Activated CD8-positive, alpha-beta memory T cell treated with anti-CD3 and anti-CD28 coated beads, Interleukin-2, amount 10 ng/mL, durations not matched to agents 7 days and 5 days (primary cell): ENCODE measurements at regions of chr12 and their contacts with region 1.

Region 1: GRCh38 chr12:49553512-49554088 is 14.3 kb downstream of the MCRS1 start:
- DNase-seq: no peak
- ATAC-seq: peak; percentile 74
- H3K4me3 Mint-ChIP-seq: no peak overlapping the region
- H3K27ac Mint-ChIP-seq: no peak overlapping the region
- H3K4me1 Mint-ChIP-seq: peaks cover 3% of the 10 kb centered on the region
- H3K27me3 Mint-ChIP-seq: peaks cover 17% of the 10 kb centered on the region

Region 2: DNA sequence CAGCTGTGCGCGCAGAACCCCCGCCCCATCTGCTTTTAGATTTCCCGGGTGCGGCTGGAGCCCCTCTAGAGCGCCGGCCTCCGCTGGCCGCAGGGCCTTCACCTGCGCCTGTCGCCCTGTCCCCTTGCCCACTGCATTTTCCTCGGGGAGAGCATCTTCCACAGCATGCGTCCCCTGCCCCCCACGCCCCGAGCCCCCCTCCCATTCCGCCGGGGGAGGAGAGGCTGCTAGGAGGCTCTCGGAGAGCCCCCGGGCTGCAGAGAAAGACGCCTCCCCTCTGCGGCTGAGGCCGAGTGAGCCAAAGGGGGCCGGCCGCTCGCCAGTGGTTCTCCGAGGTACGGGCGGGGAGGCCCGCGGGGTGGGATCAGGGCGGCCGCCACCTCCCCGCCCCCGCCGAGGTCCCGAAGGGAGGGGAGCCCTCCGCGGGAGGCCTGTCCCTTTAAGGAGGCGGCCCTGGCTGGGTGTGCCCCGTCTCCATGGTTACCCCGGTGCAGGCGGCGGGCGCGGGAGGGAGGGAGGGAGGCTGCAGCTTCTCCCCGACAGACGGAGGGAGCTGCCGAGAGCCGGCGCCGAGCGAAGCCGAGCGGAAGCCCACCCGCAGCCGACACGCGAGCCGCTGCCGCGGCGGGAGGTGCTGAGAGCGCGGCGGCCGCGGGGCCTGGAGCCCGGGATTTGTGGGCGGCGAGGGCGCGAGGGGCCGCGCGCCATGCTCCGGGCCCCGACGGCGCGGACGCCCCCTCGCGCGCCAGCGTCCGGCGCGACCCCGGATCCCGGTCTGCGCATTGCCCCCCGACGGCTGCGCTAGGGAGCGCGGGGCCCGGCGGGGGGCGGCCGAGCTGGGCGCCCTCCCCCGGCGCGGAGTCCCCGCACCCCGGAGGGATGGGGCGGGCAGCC is 14.8 kb before region 1 on chr12 and contains the start of gene KCNH3:
- CTCF ChIA-PET with region 1: interaction called, 12 read pairs
- DNase-seq: peak; percentile 95
- ATAC-seq: peak; percentile 92
- H3K4me3 Mint-ChIP-seq: peak within 1 kb of the TSS; percentile 49
- H3K27ac Mint-ChIP-seq: no peak within 1 kb of the TSS
- H3K4me1 Mint-ChIP-seq: peaks cover 14% of the 10 kb centered on the region
- H3K27me3 Mint-ChIP-seq: peaks cover 53% of the 10 kb centered on the region
- total RNA-seq, gene KCNH3: 1.1 to 1.2 TPM

Region 3: GRCh38 chr12:49567611-49568441 is 14.2 kb after region 1 on chr12 and contains the start of gene MCRS1:
- CTCF ChIA-PET with region 1: interaction called, 56 read pairs
- DNase-seq: peak; percentile 93
- ATAC-seq: peak; percentile 81
- H3K4me3 Mint-ChIP-seq: peak within 1 kb of the TSS; percentile 88
- H3K27ac Mint-ChIP-seq: peak within 1 kb of the TSS; percentile 96
- H3K4me1 Mint-ChIP-seq: peaks cover 57% of the 10 kb centered on the region
- H3K27me3 Mint-ChIP-seq: no peaks in the 10 kb centered on the region
- total RNA-seq, gene MCRS1: 70.1 to 72.1 TPM

Region 4: DNA sequence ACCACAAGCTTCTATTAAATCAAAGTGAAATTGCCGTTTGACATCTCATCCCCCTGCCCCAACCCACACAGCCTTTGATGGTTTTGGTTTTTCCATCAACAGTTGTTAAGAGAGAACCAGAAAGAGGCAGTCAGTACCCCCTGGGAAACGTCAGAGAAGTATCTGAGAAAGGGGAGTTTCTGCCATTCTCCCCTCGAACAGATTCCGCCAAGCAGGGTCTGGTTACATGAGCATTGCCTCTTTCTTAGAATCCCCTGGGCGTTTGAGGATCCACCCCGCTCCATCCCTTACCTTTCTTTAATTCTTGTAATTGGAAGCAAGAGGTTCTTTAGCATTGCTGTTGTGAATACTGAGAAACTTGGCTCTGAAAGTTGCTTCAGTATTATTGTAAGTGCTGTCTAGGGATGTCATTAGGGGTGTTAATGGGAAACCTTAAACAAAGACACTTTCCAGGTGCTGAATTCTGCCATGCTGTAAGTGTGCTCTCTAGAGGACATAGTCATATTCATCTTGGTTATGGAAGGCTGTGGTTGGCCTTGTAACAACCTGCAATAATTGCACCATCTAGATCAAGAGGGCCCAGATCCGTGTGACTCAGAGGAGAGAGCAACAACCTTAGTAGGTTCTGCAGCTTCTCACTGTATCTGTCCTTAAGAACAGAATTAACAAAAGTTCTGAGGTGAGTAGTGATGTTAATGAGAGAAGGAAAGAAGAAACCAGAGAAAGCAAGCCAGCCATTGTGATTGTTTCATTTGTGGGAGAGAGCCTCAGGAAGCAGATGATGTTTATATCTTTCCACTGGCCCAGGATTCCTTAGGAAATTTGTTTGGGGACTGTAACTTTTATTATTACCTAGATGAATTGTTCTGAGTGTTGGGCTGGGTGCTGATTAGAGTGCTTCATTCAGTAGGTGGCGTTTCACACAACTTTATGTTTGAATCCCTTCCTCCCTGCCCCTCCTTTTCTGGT is 196.7 kb after region 1 on chr12:
- CTCF ChIA-PET with region 1: no interaction called
- DNase-seq: peak; percentile 79
- ATAC-seq: peak; percentile 85
- H3K4me3 Mint-ChIP-seq: peak overlapping the region; percentile 57
- H3K27ac Mint-ChIP-seq: peak overlapping the region; percentile 94
- H3K4me1 Mint-ChIP-seq: peaks cover 78% of the 10 kb centered on the region
- H3K27me3 Mint-ChIP-seq: no peaks in the 10 kb centered on the region